Gastrocnemius medialis (tissue), 4 donors: ENCODE measurements at regions of chr10 and their contacts with region 1.

Region 1: DNA sequence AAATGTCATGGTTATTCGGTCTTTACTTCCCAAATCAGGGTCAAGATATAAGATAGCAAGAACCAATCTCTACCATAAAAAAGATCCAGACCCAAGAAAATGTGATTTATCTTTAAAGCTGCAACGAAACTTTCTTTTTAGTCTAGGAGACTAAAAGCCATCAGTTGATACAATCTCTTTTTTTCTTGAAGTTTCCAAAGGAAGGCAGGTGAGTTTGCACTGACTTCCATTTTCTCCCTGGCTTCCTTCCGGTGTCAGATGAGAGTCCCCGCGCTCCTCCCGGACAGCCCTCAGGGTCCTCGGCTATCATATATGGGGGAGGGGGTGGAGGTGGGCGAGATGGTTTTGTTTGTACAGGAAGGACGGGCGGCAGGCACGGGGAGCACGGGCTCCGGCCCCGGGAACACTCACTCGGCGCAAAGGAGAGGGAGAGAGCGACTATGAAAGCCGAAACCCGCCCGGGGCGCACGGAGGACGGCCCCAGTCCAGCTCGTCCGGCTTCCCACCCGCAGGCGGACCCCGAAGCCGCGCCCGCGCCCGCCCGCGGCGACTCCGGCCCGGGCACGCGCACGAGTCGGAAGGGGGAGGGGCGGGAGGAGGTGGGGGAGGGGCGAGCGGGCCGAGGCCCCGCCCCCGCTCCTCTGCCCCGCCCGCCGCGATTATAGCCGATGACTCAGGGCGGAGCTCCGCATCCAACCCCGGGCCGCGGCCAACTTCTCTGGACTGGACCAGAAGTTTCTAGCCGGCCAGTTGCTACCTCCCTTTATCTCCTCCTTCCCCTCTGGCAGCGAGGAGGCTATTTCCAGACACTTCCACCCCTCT is at the start of gene BAG3:
- DNase-seq: peak; percentile 97 to 98
- ATAC-seq: peak; percentile 81 to 83
- H3K4me3 ChIP-seq: peak within 1 kb of the TSS; percentile 80 to 85 (median 81)
- H3K27ac ChIP-seq: peak within 1 kb of the TSS; percentile 91 to 99 (median 97)
- H3K4me1 ChIP-seq: peaks cover 20 to 27% of the 10 kb centered on the region in 2 donors
- H3K27me3 ChIP-seq: no peaks in the 10 kb centered on the region
- CTCF ChIP-seq: no peak
- POLR2A ChIP-seq: no peak
- total RNA-seq, gene BAG3: 337 to 626 (median 393) TPM

Region 2: DNA sequence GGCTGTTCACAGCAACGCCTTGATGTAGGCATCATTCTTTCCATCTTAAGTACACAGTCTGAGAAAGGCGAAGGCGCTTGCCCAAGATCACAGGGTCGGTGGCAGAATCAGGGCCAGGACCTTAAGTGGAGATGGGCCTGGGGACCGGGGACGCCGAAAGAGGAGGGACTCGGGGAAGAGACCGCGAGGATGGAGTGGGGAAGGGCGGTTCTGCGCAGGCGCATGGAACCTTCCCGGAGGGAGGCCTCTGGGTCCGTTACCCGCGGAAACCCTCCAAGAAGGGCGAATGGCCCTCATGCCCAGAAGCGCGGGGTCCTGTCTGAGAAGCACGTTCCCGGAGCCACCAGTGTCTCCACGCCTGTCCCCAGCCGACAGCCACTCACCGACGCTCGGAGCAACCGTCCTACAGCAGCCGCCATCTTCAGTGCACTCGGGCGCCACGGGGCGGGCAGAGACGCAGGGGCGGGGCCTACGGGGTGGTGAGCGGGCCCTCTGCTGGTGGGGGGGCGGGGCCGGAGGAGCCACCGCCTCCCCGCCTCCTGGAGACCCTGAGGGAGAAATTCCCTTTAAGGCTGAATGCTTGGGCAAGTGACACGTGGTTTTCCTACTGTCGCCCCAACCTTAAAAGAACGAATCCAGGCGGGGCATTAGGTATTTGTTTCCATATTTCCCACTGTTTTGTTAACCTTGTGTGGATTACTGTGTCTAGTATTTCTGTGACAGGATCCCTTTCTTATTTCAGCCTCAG is 472.4 kb before region 1 on chr10 and contains the start of gene PRDX3:
- in situ Hi-C with region 1: no loop called
- intact Hi-C with region 1: loop called (anchors 1 kb)
- DNase-seq: peak; percentile 83 to 90
- ATAC-seq: peak; percentile 96 to 97
- H3K4me3 ChIP-seq: peak within 1 kb of the TSS; percentile 74 to 91 (median 87)
- H3K27ac ChIP-seq: peak within 1 kb of the TSS; percentile 90 to 97 (median 94)
- H3K4me1 ChIP-seq: peaks cover 18 to 24% of the 10 kb centered on the region in 2 donors
- H3K27me3 ChIP-seq: no peaks in the 10 kb centered on the region
- CTCF ChIP-seq: peak in 3 of 5 experiments; percentile 36 to 56 (median 50)
- POLR2A ChIP-seq: peak; percentile 65 to 79
- total RNA-seq, gene PRDX3: 227 to 342 (median 250) TPM

Region 3: DNA sequence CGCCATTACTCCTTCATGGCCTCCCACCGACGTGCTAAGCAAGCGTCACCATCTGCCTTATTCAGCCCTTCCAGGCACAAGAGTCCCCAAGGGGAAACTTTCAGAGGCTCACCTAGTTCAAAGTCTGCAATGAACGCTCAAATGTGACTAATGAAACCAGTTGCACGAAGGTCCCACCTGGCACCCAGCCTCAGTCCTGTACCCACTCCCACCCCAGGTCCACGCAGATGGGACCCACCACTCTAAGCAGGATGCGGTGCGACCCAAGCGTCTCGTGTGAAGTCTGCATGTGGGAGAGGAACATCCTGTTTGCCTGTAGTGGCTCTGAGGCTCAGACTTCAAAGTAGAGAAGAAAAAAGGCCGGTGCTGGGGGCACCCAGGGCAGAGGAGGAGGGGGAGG is 148.7 kb before region 1 on chr10:
- in situ Hi-C with region 1: no loop called
- intact Hi-C with region 1: no loop called
- DNase-seq: no peak
- ATAC-seq: no peak
- H3K4me3 ChIP-seq: no peak overlapping the region
- H3K27ac ChIP-seq: no peak overlapping the region
- H3K4me1 ChIP-seq: no peaks in the 10 kb centered on the region
- H3K27me3 ChIP-seq: no peaks in the 10 kb centered on the region
- CTCF ChIP-seq: no peak
- POLR2A ChIP-seq: no peak

Region 4: GRCh38 chr10:119608316-119609155 is 42.4 kb before region 1 on chr10:
- in situ Hi-C with region 1: no loop called
- intact Hi-C with region 1: loop called (anchors 2 kb)
- DNase-seq: peak; percentile 12 to 49
- ATAC-seq: peak; percentile 82 to 97
- H3K4me3 ChIP-seq: peak overlapping the region in 1 of 4 donors; percentile 12
- H3K27ac ChIP-seq: no peak overlapping the region
- H3K4me1 ChIP-seq: peaks cover 0 to 6% of the 10 kb centered on the region in 2 donors
- H3K27me3 ChIP-seq: no peaks in the 10 kb centered on the region
- CTCF ChIP-seq: peak; percentile 37 to 82 (median 64)
- POLR2A ChIP-seq: no peak

Region 5: DNA sequence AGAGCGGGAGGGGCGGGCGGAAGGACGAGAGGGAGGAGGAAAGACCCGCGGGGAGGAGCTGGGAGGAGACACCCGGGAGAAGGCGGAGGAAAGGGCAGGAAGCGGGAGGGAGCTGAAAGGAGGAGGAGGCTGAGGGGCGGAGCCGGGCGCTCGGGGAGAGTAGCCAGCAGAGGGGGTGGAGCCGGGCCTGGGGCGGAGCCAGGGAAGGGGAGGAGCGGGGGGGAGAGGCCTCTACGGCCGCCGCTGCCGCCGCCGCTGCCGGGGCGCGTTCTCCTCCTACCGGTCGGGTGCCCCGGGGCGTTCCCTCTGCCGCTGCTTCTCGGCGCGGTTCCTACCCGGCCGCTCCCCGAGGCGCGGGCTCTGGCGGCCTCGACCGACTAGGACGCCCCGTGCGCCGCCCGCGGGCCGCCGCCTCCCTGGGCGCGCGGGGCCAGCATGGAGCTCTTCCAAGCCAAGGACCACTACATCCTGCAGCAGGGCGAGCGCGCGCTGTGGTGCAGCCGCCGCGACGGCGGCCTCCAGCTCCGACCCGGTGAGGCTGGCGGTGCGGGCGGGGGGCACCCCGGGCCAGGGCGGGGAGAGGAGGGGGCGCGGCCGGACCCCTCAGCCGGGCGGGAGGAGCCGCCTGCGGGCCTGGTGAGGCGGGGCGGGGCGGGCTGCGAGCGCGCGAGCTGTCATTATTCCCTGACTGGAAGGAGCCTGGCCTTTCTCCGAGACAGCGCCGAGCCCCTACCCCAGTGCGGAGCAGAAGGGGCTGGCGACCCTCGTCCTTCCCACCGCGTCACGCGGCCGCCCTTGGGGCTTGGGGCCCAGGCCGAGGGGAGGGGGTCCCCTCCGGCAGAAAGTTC is 75.1 kb after region 1 on chr10 and contains the start of gene INPP5F:
- in situ Hi-C with region 1: no loop called
- intact Hi-C with region 1: loop called (anchors 1 kb)
- DNase-seq: peak; percentile 99
- ATAC-seq: peak; percentile 94 to 96
- H3K4me3 ChIP-seq: peak within 1 kb of the TSS; percentile 74 to 93 (median 82)
- H3K27ac ChIP-seq: peak within 1 kb of the TSS; percentile 92 to 96 (median 94)
- H3K4me1 ChIP-seq: peaks cover 18 to 26% of the 10 kb centered on the region in 2 donors
- H3K27me3 ChIP-seq: no peaks in the 10 kb centered on the region
- CTCF ChIP-seq: peak; percentile 28 to 56 (median 41)
- POLR2A ChIP-seq: peak; percentile 75 to 77
- total RNA-seq, gene INPP5F: 8.7 to 11.6 (median 10.5) TPM

Region 6: DNA sequence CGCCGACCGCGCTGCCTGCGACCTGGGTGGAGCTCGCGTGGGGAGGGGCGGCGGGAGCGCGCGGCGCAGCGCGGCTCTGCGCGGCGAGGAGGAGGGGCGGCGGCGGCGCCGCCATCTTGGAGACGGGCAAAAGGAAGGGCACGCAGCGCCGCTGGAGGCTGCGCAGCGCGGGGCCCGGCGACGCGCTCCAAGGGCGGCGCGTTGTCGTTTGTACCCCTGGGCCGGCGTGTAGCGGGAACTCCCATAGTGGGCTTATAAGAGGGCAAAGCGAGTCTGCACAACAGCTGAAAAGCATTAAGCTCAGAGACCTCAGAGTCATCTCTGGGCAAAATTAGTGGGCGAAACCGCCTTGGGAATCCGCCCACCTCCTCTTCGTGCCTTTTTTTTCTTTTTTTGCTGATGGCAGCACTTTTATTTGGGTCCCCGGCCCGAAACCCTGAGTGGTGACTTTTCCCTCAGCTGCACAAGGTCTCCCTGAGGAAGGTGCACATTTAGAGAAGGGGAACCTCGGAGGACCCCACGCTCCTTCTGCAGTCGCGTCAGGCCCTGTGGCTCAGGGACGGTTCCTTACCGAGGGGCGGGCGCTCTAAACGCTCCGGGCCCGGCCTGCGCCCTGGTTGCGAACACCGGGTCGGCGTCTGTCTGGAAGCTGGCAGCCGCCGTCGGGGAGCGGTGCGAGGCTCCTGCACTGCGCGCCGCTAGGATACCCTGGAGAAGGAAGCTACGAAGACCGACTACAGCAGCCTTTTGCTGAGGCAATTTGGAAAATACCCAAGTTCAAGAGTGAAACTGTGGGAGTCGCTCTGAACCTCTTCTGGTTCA is 222.2 kb after region 1 on chr10:
- in situ Hi-C with region 1: no loop called
- intact Hi-C with region 1: loop called (anchors 1 kb)
- DNase-seq: peak; percentile 71 to 81
- ATAC-seq: peak; percentile 92 to 93
- H3K4me3 ChIP-seq: peak overlapping the region; percentile 85 to 96 (median 90)
- H3K27ac ChIP-seq: peak overlapping the region; percentile 89 to 97 (median 92)
- H3K4me1 ChIP-seq: peaks cover 17 to 28% of the 10 kb centered on the region in 2 donors
- H3K27me3 ChIP-seq: no peaks in the 10 kb centered on the region
- CTCF ChIP-seq: peak in 1 of 5 experiments; percentile 2
- POLR2A ChIP-seq: peak in 1 of 2 donors; percentile 42